Left cardiac atrium (tissue), 4 donors: ENCODE measurements at regions of chr20 and their contacts with region 1.

Region 1: GRCh38 chr20:56043227-56043626 is 37.9 kb upstream of the CBLN4 start:
- DNase-seq: no peak
- ATAC-seq: no peak

Region 2: DNA sequence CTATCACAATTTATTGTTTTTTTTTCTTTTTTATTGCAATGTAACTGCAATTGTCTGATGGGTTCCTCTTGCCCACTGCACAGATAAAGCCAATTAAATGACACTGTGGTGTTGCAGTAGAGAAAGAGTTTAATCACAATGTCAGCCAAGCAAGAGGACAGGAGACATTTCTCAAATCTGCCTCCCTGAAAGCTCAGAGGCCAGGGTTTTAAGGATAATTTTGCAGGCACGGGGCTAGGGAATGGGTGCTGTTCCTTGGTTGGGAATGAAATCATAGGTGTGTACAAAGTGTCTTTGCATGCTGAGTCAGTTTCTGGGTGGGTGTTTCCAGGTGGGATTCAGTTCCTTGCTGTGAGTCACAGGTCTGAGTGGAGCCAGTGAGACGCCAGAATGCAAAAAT is 1296.5 kb before region 1 on chr20:
- intact Hi-C with region 1: no loop called
- DNase-seq: no peak
- ATAC-seq: no peak

Region 3: GRCh38 chr20:55782912-55783253 is 260.3 kb before region 1 on chr20:
- intact Hi-C with region 1: no loop called
- DNase-seq: no peak
- ATAC-seq: no peak

Region 4: DNA sequence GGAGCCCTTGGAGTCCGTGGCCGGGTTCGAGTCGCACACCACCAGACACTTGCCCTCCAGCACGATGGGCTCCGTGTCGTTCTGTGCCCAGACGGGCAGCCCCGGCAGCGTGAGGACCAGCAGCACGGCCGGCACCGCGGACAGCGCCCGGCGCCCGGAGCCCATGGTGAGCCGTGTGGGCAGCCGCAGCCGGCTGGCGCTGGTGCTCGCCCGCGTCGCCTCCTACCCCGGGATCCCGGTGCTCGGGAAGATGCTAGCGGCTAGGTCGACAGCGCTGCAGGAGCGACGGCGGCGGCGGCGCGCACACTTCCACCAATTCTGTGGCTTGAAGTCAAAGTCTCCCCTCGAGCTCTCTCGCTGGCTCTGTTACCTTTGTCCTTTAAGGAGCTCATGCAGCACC is 39.2 kb before region 1 on chr20:
- intact Hi-C with region 1: loop called in 1 of 2 experiments (anchors 2 kb)
- DNase-seq: peak; percentile 23
- ATAC-seq: peak; percentile 57 to 87

Region 5: GRCh38 chr20:56422076-56422823 is 379.0 kb after region 1 on chr20:
- intact Hi-C with region 1: no loop called
- DNase-seq: no peak
- ATAC-seq: peak in 1 of 2 donors; percentile 57